ENCODE measurements at regions of chr12 and their contacts with region 1.

Region 1: GRCh38 chr12:59972941-59973340 is 377.1 kb downstream of the SLC16A7 start:
- DNase-seq: peak; percentile 91
- ATAC-seq: peak; percentile 81
- H3K4me3 ChIP-seq: peak overlapping the region; percentile 37
- H3K27ac ChIP-seq: peak overlapping the region; percentile 84
- H3K4me1 ChIP-seq: peaks cover 50% of the 10 kb centered on the region
- H3K27me3 ChIP-seq: no peaks in the 10 kb centered on the region
- CTCF ChIP-seq: no peak

Region 2: GRCh38 chr12:59595883-59596540 is 376.9 kb before region 1 on chr12 and contains the start of gene SLC16A7:
- CTCF ChIA-PET with region 1: no interaction called
- POLR2A ChIA-PET with region 1: no interaction called
- intact Hi-C with region 1: loop called (anchors 1 kb)
- DNase-seq: peak; percentile 84
- ATAC-seq: peak; percentile 64
- H3K4me3 ChIP-seq: peak within 1 kb of the TSS; percentile 94
- H3K27ac ChIP-seq: peak within 1 kb of the TSS; percentile 41
- H3K4me1 ChIP-seq: peaks cover 17% of the 10 kb centered on the region
- H3K27me3 ChIP-seq: no peaks in the 10 kb centered on the region
- CTCF ChIP-seq: no peak
- total RNA-seq, gene SLC16A7: 10.4 and 11.4 TPM in 2 replicates

Region 3: DNA sequence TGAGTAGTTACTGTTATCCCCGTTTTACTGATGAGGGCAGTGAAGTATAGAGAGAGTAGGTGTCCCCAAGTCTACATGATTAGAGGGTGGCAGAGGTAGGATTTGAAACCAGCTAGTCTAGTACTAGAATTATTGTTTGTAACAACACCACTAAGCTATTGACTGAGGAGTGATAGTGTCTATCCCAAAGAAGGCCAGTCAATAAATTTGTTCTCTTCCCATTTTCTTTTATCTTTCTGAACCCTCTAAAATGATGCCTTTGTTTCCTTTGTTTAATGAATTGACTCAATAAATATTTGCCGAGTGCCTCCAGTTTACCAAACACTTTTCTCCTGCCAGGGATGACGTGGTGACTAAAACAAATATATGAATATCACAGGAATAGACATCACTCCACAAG is 129.6 kb before region 1 on chr12:
- CTCF ChIA-PET with region 1: no interaction called
- POLR2A ChIA-PET with region 1: no interaction called
- intact Hi-C with region 1: loop called (anchors 5 kb)
- DNase-seq: peak; percentile 64
- ATAC-seq: peak; percentile 47
- H3K4me3 ChIP-seq: no peak overlapping the region
- H3K27ac ChIP-seq: peak overlapping the region; percentile 37
- H3K4me1 ChIP-seq: peaks cover 39% of the 10 kb centered on the region
- H3K27me3 ChIP-seq: no peaks in the 10 kb centered on the region
- CTCF ChIP-seq: no peak

Region 4: GRCh38 chr12:59874781-59875180 is 98.2 kb before region 1 on chr12:
- CTCF ChIA-PET with region 1: no interaction called
- POLR2A ChIA-PET with region 1: no interaction called
- intact Hi-C with region 1: no loop called
- DNase-seq: no peak
- ATAC-seq: no peak
- H3K4me3 ChIP-seq: no peak overlapping the region
- H3K27ac ChIP-seq: no peak overlapping the region
- H3K4me1 ChIP-seq: no peaks in the 10 kb centered on the region
- H3K27me3 ChIP-seq: no peaks in the 10 kb centered on the region
- CTCF ChIP-seq: no peak

Region 5: DNA sequence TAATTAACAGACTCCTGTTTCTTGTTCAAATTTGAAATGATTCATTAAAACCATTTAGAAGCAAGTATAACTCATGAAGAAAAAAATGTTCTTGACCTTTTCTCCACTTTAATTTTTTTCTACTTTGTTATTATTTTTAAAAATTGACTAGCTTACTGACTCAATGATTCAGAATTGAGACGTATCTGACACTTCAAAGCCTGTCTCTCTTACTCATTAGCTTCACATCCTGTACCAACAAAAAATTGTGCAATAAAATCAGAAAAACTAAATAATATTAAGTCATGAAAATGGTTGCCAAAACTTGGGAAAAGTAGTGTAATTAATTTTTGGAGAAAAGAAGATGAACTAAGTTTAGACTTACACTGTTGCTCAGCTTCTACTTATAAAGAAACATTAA is 45.9 kb before region 1 on chr12:
- CTCF ChIA-PET with region 1: no interaction called
- POLR2A ChIA-PET with region 1: no interaction called
- intact Hi-C with region 1: loop called (anchors 2 kb)
- DNase-seq: peak; percentile 60
- ATAC-seq: peak; percentile 34; the same call in 1 of the 2 replicates
- H3K4me3 ChIP-seq: no peak overlapping the region
- H3K27ac ChIP-seq: no peak overlapping the region
- H3K4me1 ChIP-seq: peaks cover 31% of the 10 kb centered on the region
- H3K27me3 ChIP-seq: no peaks in the 10 kb centered on the region
- CTCF ChIP-seq: no peak

Region 6: GRCh38 chr12:60014436-60014835 is 41.5 kb after region 1 on chr12:
- CTCF ChIA-PET with region 1: no interaction called
- POLR2A ChIA-PET with region 1: no interaction called
- intact Hi-C with region 1: no loop called
- DNase-seq: no peak
- ATAC-seq: no peak
- H3K4me3 ChIP-seq: no peak overlapping the region
- H3K27ac ChIP-seq: no peak overlapping the region
- H3K4me1 ChIP-seq: no peaks in the 10 kb centered on the region
- H3K27me3 ChIP-seq: no peaks in the 10 kb centered on the region
- CTCF ChIP-seq: no peak

Region 7: GRCh38 chr12:60052483-60052882 is 79.5 kb after region 1 on chr12:
- CTCF ChIA-PET with region 1: no interaction called
- POLR2A ChIA-PET with region 1: no interaction called
- intact Hi-C with region 1: loop called (anchors 5 kb)
- DNase-seq: peak; percentile 64
- ATAC-seq: peak; percentile 71
- H3K4me3 ChIP-seq: no peak overlapping the region
- H3K27ac ChIP-seq: 0 out of 2 replicates have a peak overlapping the region, but pooled peaks have one; percentile 6
- H3K4me1 ChIP-seq: peaks cover 13% of the 10 kb centered on the region
- H3K27me3 ChIP-seq: no peaks in the 10 kb centered on the region
- CTCF ChIP-seq: no peak

Region 8: DNA sequence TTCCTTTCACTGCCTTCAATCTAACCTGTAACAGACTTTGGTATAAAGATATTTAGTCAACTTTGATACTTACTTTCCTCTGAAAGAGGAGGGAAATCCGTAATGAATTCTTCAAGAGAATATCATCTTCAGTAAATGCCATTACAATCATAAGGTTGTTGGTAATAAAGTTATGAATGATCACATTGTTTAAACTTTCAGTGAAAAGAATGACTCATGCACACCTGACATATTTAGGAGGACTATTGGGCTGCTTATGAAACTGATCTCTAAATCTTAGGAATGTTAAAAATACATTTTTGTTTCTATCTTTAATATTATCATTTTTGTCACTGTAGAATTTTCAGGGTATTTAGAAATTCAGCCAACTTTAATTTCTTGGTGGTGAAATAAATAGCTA is 97.6 kb after region 1 on chr12:
- CTCF ChIA-PET with region 1: no interaction called
- POLR2A ChIA-PET with region 1: no interaction called
- intact Hi-C with region 1: loop called (anchors 1 kb)
- DNase-seq: peak; percentile 85
- ATAC-seq: peak; percentile 48
- H3K4me3 ChIP-seq: no peak overlapping the region
- H3K27ac ChIP-seq: peak overlapping the region; percentile 34
- H3K4me1 ChIP-seq: peaks cover 38% of the 10 kb centered on the region
- H3K27me3 ChIP-seq: no peaks in the 10 kb centered on the region
- CTCF ChIP-seq: no peak

Region 9: GRCh38 chr12:60106214-60106613 is 133.3 kb after region 1 on chr12:
- CTCF ChIA-PET with region 1: no interaction called
- POLR2A ChIA-PET with region 1: no interaction called
- intact Hi-C with region 1: loop called (anchors 5 kb)
- DNase-seq: peak; percentile 56
- ATAC-seq: peak; percentile 67
- H3K4me3 ChIP-seq: no peak overlapping the region
- H3K27ac ChIP-seq: no peak overlapping the region
- H3K4me1 ChIP-seq: peaks cover 15% of the 10 kb centered on the region
- H3K27me3 ChIP-seq: no peaks in the 10 kb centered on the region
- CTCF ChIP-seq: peak; percentile 77